Keratinocyte (primary cell): ENCODE measurements at regions of chr17 and their contacts with region 1.

Region 1: GRCh38 chr17:35312790-35313711 is 60.4 kb downstream of the SLFN11 start:
- DNase-seq: peak; percentile 15
- H3K4me3 ChIP-seq: no peak overlapping the region
- H3K27ac ChIP-seq: no peak overlapping the region
- H3K4me1 ChIP-seq: peaks cover 30% of the 10 kb centered on the region
- H3K27me3 ChIP-seq: no peaks in the 10 kb centered on the region
- CTCF ChIP-seq: peak; percentile 78 to 86 (median 81)

Region 2: GRCh38 chr17:35094902-35095301 is 218.1 kb before region 1 on chr17:
- dilution Hi-C with region 1: no loop called
- DNase-seq: no peak
- H3K4me3 ChIP-seq: no peak overlapping the region
- H3K27ac ChIP-seq: peak overlapping the region; percentile 64
- H3K4me1 ChIP-seq: peaks cover 7% of the 10 kb centered on the region
- H3K27me3 ChIP-seq: no peaks in the 10 kb centered on the region
- CTCF ChIP-seq: no peak

Region 3: GRCh38 chr17:35254107-35254802 is 58.8 kb before region 1 on chr17:
- dilution Hi-C with region 1: no loop called
- DNase-seq: no peak
- H3K4me3 ChIP-seq: no peak overlapping the region
- H3K27ac ChIP-seq: peak overlapping the region; percentile 57
- H3K4me1 ChIP-seq: peaks cover 23% of the 10 kb centered on the region
- H3K27me3 ChIP-seq: no peaks in the 10 kb centered on the region
- CTCF ChIP-seq: no peak

Region 4: GRCh38 chr17:35521150-35521549 is 208.1 kb after region 1 on chr17:
- dilution Hi-C with region 1: loop called (anchors 10 kb)
- DNase-seq: no peak
- H3K4me3 ChIP-seq: no peak overlapping the region
- H3K27ac ChIP-seq: no peak overlapping the region
- H3K4me1 ChIP-seq: peaks cover 10% of the 10 kb centered on the region
- H3K27me3 ChIP-seq: peaks cover 4% of the 10 kb centered on the region
- CTCF ChIP-seq: no peak